ENCODE measurements at regions of chr4 and their contacts with region 1.

Region 1: GRCh38 chr4:53929955-53930798 is 134.2 kb downstream of the CHIC2 start:
- DNase-seq: peak; percentile 88
- H3K4me3 ChIP-seq: no peak overlapping the region
- H3K27ac ChIP-seq: no peak overlapping the region
- H3K4me1 ChIP-seq: peaks cover 4% of the 10 kb centered on the region
- H3K27me3 ChIP-seq: peaks cover 0 to 3% of the 10 kb centered on the region in 2 experiments
- CTCF ChIP-seq: peak; percentile 71 to 79
- POLR2A ChIP-seq: no peak

Region 2: DNA sequence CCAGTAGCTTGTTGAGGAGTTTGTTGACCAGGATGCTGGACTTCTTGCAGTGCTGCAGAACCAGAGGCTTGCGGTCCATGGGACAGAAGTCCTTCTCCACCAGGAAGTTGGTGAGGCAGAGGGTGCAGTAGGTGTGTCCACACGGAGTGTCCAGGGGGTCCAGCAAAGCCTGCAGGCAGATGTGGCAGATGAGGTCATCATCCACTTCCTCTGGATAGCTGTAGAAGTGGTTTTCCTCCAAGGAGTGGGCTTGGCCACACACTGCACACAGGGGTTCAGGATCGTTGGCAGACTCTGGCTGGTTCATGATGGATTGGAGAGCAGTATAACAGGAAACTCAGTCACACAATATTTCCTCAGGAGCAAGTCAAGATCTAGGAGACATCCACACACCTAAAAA is 356.5 kb before region 1 on chr4:
- CTCF ChIA-PET with region 1: no interaction called
- POLR2A ChIA-PET with region 1: no interaction called
- dilution Hi-C with region 1: no loop called
- intact Hi-C with region 1: no loop called
- DNase-seq: peak; percentile 26
- H3K4me3 ChIP-seq: no peak overlapping the region
- H3K27ac ChIP-seq: no peak overlapping the region
- H3K4me1 ChIP-seq: peaks cover 36% of the 10 kb centered on the region
- H3K27me3 ChIP-seq: no peaks in the 10 kb centered on the region
- CTCF ChIP-seq: no peak
- POLR2A ChIP-seq: no peak

Region 3: DNA sequence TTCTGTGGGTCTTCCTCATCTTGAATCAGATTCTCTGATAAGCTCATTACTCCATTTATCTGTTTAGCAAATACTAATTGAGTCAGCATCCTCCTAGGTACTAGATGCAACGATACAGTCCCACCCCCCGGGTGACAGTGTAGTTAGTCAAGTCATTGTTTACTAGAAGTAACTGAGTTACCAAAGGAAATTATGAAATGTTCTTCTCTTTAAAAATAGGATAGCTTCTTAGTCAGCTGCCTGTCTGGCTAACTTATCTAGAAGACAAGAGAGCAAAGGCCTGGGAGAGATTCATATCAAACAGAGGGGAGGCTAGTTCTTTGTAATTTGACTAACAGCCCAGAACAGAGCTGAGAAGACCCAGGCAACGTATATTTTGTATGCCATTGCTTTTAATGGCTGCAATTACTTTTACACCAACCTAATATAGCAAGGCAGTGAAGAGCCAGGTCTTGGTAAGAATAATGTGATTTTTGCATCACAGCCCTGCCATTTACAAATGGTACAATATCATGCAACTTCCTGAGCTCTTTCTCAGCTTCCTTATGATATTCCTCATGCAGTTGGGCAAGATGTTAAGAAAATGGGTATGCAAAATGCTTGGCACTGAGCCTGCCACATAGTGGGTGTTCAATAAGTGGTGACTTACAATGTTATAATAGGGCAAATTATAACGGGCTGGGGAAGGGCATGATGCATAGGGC is 15.7 kb before region 1 on chr4:
- CTCF ChIA-PET with region 1: interaction called, 34 read pairs
- POLR2A ChIA-PET with region 1: no interaction called
- dilution Hi-C with region 1: no loop called
- intact Hi-C with region 1: no loop called
- DNase-seq: peak; percentile 61
- H3K4me3 ChIP-seq: no peak overlapping the region
- H3K27ac ChIP-seq: peak overlapping the region; percentile 1
- H3K4me1 ChIP-seq: peaks cover 34% of the 10 kb centered on the region
- H3K27me3 ChIP-seq: no peaks in the 10 kb centered on the region
- CTCF ChIP-seq: no peak
- POLR2A ChIP-seq: no peak

Region 4: DNA sequence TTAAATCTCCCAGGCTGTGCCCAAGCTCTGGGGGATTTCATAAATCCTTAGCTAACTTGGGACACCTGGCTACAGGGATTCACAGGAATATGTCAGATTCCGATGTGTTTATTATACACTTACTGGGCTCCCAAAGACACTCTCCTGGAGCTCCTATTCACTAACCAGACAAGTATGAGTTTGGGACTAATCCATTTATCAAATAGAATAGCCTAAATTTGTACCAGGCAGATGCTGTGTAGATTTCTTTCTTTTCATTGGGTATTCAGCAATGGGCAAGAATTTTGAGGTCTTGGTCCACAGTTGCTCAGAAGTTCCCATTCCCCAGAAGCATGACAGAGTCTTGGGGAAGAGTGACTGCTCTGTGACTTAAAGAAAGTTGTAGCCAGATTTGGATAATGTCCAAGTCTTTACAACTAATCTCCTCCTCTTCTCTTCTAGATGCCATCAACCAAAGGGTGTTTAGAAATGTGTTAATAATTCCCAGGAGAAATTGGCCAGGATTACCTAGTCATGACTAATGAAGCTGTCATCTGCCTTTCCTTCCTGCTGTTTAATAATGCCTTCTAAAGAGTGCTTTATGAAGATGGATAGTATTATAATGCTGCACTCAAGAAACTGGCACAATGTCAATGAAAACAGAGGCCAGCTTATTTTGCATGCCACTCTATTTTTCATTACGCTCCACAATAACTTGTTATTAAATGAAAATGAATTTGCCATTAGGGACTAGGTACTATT is 13.3 kb after region 1 on chr4:
- CTCF ChIA-PET with region 1: interaction called, 33 read pairs
- POLR2A ChIA-PET with region 1: no interaction called
- dilution Hi-C with region 1: no loop called
- intact Hi-C with region 1: no loop called
- DNase-seq: peak; percentile 98
- H3K4me3 ChIP-seq: no peak overlapping the region
- H3K27ac ChIP-seq: peak overlapping the region; percentile 52
- H3K4me1 ChIP-seq: peaks cover 17% of the 10 kb centered on the region
- H3K27me3 ChIP-seq: no peaks in the 10 kb centered on the region
- CTCF ChIP-seq: no peak
- POLR2A ChIP-seq: no peak

Region 5: GRCh38 chr4:54058171-54058570 is 128.0 kb after region 1 on chr4:
- CTCF ChIA-PET with region 1: interaction called, 21 read pairs
- POLR2A ChIA-PET with region 1: no interaction called
- dilution Hi-C with region 1: no loop called
- intact Hi-C with region 1: loop called (anchors 1 kb)
- DNase-seq: no peak
- H3K4me3 ChIP-seq: no peak overlapping the region
- H3K27ac ChIP-seq: no peak overlapping the region
- H3K4me1 ChIP-seq: peaks cover 45% of the 10 kb centered on the region
- H3K27me3 ChIP-seq: no peaks in the 10 kb centered on the region
- CTCF ChIP-seq: no peak
- POLR2A ChIP-seq: no peak

Region 6: GRCh38 chr4:54082168-54082567 is 152.0 kb after region 1 on chr4:
- CTCF ChIA-PET with region 1: interaction called, 10 read pairs
- POLR2A ChIA-PET with region 1: no interaction called
- dilution Hi-C with region 1: no loop called
- intact Hi-C with region 1: no loop called
- DNase-seq: peak; percentile 96
- H3K4me3 ChIP-seq: peak overlapping the region in 1 of 3 experiments; percentile 20
- H3K27ac ChIP-seq: peak overlapping the region; percentile 77
- H3K4me1 ChIP-seq: peaks cover 39% of the 10 kb centered on the region
- H3K27me3 ChIP-seq: no peaks in the 10 kb centered on the region
- CTCF ChIP-seq: no peak
- POLR2A ChIP-seq: peak; percentile 67

Region 7: GRCh38 chr4:54217642-54218495 is 287.7 kb after region 1 on chr4:
- CTCF ChIA-PET with region 1: interaction called, 162 read pairs
- POLR2A ChIA-PET with region 1: no interaction called
- dilution Hi-C with region 1: loop called (anchors 25 kb)
- intact Hi-C with region 1: loop called (anchors 1 kb)
- DNase-seq: peak; percentile 84
- H3K4me3 ChIP-seq: peak overlapping the region; percentile 34 to 78 (median 58)
- H3K27ac ChIP-seq: peak overlapping the region; percentile 30
- H3K4me1 ChIP-seq: peaks cover 2% of the 10 kb centered on the region
- H3K27me3 ChIP-seq: peaks cover 2 to 7% of the 10 kb centered on the region in 2 experiments
- CTCF ChIP-seq: peak; percentile 82 to 84
- POLR2A ChIP-seq: no peak